Activated CD4-positive, alpha-beta T cell treated with anti-CD3 and anti-CD28 coated beads for 36 hours (primary cell): ENCODE measurements at regions of chr7 and their contacts with region 1.

Region 1: GRCh38 chr7:155804897-155805825 is 7.1 kb downstream of the SHH start:
- DNase-seq: peak; percentile 78
- ATAC-seq: peak; percentile 78
- H3K4me3 Mint-ChIP-seq: no peak overlapping the region
- H3K27ac Mint-ChIP-seq: no peak overlapping the region
- H3K4me1 Mint-ChIP-seq: peaks cover 18% of the 10 kb centered on the region
- H3K27me3 Mint-ChIP-seq: peaks cover 52% of the 10 kb centered on the region

Region 2: DNA sequence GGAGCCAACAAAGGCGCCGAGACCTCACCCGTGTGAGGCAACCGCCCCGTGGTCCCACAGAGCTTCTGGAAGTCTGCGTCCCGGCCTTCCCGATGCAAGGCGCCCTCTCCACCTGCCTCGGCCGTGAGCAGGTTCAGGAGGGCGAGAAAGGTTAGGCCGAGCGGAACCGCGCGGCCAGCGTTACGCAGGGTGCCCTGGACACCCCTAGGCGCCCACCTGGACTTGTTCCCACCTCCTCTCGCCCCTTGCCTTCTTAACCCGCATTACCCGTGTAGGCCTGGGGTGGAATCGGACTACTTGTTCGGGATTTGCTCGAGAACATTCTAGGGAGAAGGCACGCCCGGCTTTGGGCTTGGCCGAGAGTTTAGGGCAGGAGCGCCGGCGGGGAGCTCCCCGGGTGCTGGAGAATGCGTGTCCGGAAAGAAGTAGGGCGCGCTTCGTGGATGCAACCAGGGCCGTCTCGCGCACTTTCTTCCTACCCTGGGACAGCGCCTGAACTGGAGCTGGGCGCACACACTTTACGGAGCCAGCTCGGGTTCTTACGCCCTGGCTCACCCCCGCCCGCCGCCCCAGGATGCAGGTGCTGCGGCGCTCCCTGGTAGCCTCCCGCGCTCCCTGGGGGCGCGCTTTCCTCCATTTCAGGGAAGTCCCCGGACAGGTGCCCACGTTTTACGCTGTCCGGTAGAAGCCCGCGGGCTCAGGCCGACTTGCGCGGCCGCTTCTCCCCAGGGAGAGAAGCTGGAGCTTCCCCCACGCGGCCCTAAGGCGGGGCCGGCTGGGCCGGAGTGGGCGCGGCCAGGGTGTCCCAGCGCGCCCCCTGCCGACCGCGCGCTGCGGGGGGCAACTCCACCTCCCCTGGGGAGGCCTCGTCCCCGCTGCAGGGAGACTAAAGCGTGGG is 433.0 kb before region 1 on chr7:
- CTCF ChIA-PET with region 1: no interaction called
- POLR2A ChIA-PET with region 1: no interaction called
- intact Hi-C with region 1: loop called in 1 of 2 experiments (anchors 10 kb)
- DNase-seq: peak; percentile 45
- ATAC-seq: peak; percentile 74
- H3K4me3 Mint-ChIP-seq: no peak overlapping the region
- H3K27ac Mint-ChIP-seq: no peak overlapping the region
- H3K4me1 Mint-ChIP-seq: peaks cover 29% of the 10 kb centered on the region
- H3K27me3 Mint-ChIP-seq: peaks cover 65% of the 10 kb centered on the region

Region 3: GRCh38 chr7:155456738-155457564 is 348.2 kb before region 1 on chr7:
- CTCF ChIA-PET with region 1: no interaction called
- POLR2A ChIA-PET with region 1: no interaction called
- intact Hi-C with region 1: loop called in 1 of 2 experiments (anchors 5 kb)
- DNase-seq: peak; percentile 69
- ATAC-seq: peak; percentile 33
- H3K4me3 Mint-ChIP-seq: peak overlapping the region; percentile 54
- H3K27ac Mint-ChIP-seq: no peak overlapping the region
- H3K4me1 Mint-ChIP-seq: peaks cover 18% of the 10 kb centered on the region
- H3K27me3 Mint-ChIP-seq: peaks cover 67% of the 10 kb centered on the region

Region 4: GRCh38 chr7:155506854-155507337 is 298.3 kb before region 1 on chr7:
- CTCF ChIA-PET with region 1: no interaction called
- POLR2A ChIA-PET with region 1: no interaction called
- intact Hi-C with region 1: loop called (anchors 2 to 5 kb)
- DNase-seq: peak; percentile 53
- ATAC-seq: peak; percentile 58
- H3K4me3 Mint-ChIP-seq: no peak overlapping the region
- H3K27ac Mint-ChIP-seq: no peak overlapping the region
- H3K4me1 Mint-ChIP-seq: peaks cover 24% of the 10 kb centered on the region
- H3K27me3 Mint-ChIP-seq: peaks cover 77% of the 10 kb centered on the region

Region 5: GRCh38 chr7:156473476-156474240 is 668.5 kb after region 1 on chr7:
- CTCF ChIA-PET with region 1: no interaction called
- POLR2A ChIA-PET with region 1: no interaction called
- intact Hi-C with region 1: loop called in 1 of 2 experiments (anchors 2 kb)
- DNase-seq: peak; percentile 63
- ATAC-seq: no peak
- H3K4me3 Mint-ChIP-seq: no peak overlapping the region
- H3K27ac Mint-ChIP-seq: no peak overlapping the region
- H3K4me1 Mint-ChIP-seq: no peaks in the 10 kb centered on the region
- H3K27me3 Mint-ChIP-seq: peaks cover 30% of the 10 kb centered on the region

Region 6: DNA sequence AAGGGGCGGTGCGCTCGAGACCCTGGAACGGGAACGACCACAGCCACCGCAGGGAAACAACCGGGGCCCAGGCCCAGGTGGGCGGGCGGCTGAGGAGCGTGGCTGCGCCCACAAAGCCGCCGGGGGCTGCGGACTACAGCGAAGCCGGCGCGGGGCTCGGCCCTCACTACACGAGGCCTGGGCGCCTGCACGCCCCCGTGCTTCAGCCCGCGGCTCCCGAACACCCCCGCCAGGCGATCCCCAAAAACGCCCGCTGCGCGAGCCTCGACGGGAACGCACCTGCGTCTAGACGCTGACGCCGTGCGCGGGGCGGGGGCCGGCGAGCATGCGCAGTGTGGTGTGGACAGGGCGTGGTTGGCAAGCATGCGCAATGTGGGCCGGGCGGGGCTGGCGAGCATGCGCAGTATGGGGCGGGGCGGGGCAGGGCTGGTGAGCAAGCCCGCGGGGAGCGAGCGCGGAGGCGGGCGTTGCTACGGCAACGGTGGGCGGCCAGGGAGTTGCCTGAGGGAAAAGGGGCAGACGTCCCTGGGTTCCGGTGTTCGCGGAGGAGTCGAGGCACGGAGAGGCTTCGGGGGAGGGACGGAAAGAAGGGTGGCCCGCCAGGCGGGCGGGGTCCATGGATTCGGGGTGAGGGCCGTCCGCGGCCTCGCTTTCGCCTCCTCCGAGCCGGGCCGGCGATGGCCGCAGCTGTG is 835.2 kb after region 1 on chr7 and contains the start of gene RNF32:
- CTCF ChIA-PET with region 1: no interaction called
- POLR2A ChIA-PET with region 1: no interaction called
- intact Hi-C with region 1: loop called in 1 of 2 experiments (anchors 1 kb)
- DNase-seq: peak; percentile 100
- ATAC-seq: peak; percentile 90
- H3K4me3 Mint-ChIP-seq: peak within 1 kb of the TSS; percentile 76
- H3K27ac Mint-ChIP-seq: peak within 1 kb of the TSS; percentile 87
- H3K4me1 Mint-ChIP-seq: peaks cover 15% of the 10 kb centered on the region
- H3K27me3 Mint-ChIP-seq: peaks cover 29% of the 10 kb centered on the region
- total RNA-seq, gene RNF32: 0.71 to 0.90 TPM

Region 7: DNA sequence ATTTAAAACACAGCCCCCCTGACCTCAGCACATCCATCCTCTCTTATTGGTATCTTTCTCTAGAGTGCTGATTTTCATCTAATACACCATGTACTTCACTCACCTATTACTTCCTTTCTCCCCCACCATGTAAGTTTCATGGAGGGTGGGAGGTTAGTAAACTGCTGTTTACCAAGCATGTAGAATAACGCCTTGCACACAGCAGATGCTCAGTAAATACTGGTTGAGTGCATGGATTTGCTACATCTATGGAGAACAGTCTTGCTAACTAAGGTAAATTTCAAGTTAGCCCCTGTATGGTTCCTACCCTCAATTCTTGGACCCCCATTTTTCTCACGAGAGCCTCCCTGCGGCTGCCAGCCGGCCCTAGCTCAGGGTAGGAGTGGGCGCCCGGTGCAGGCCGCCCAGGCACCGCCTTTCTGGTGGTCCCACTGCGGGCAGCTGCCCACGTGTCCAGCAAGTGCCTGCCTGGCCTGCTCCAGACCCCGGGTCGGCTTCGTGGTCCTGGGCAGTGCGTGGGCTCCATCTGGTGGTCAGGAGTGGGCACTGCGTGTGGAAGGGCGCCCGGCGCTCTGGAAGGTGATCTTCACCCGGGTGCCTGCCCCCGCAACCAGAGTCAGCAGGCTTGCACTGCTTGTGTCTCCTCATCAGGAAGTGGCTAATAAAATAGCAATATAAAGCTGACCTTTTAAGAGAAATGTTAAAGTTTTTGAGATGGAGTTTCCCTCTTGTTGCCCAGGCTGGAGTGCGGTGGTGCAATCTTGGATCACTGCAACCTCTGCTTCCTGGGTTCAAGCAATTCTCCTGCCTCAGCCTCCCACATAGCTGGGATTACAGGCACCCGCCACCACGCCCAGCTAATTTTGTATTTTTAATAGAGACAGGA is 1468.3 kb after region 1 on chr7:
- CTCF ChIA-PET with region 1: no interaction called
- POLR2A ChIA-PET with region 1: no interaction called
- intact Hi-C with region 1: loop called in 1 of 2 experiments (anchors 10 kb)
- DNase-seq: peak; percentile 81
- ATAC-seq: peak; percentile 84
- H3K4me3 Mint-ChIP-seq: no peak overlapping the region
- H3K27ac Mint-ChIP-seq: no peak overlapping the region
- H3K4me1 Mint-ChIP-seq: peaks cover 18% of the 10 kb centered on the region
- H3K27me3 Mint-ChIP-seq: peaks cover 2% of the 10 kb centered on the region